ENCODE measurements at regions of chr15 and their contacts with region 1.

Region 1: DNA sequence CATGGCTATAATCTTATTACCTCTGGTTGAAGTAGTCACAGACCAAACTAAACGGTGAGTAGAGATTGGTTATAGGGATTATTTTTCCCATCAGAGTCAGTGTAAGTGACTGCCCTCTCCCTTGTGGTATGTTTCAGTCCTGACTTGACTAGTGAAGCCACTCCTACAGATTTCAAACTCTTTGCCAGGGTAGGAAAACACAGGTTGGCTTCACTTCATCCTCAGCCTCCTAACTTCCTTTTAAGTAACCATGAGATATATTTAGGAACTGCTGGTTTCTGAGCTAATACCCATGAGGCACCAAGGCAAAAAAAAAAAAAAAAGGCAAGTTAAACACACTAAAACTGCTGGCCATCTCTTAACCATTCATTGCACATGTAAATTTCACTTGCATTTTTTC is 349.2 kb upstream of the MCTP2 start:
- DNase-seq: no peak
- H3K4me3 ChIP-seq: no peak overlapping the region
- H3K27ac ChIP-seq: no peak overlapping the region
- H3K4me1 ChIP-seq: no peaks in the 10 kb centered on the region
- H3K27me3 ChIP-seq: no peaks in the 10 kb centered on the region
- CTCF ChIP-seq: no peak

Region 2: GRCh38 chr15:93617443-93617842 is 264.7 kb before region 1 on chr15:
- intact Hi-C with region 1: no loop called
- DNase-seq: no peak
- H3K4me3 ChIP-seq: no peak overlapping the region
- H3K27ac ChIP-seq: no peak overlapping the region
- H3K4me1 ChIP-seq: no peaks in the 10 kb centered on the region
- H3K27me3 ChIP-seq: no peaks in the 10 kb centered on the region
- CTCF ChIP-seq: no peak

Region 3: DNA sequence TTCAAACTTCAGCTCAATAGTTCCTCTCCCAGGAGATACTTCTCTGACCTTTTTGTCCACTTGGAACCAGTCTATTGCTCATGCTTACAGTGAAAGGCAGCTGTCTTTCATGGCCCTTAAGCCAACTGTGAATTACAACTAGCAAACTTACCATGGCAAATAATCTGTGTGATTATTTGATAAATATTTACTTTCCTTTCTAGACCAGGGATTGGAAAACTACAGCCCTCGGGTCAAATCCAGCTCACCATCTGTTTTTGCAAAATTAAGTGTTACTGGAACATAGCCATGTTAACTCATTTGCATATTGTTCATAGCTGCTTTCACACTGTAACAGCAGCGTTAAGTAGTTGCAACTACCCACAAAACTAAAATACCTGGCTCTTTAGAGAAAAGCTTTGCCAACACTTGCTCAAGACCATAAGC is 60.1 kb after region 1 on chr15:
- intact Hi-C with region 1: loop called (anchors 10 kb)
- DNase-seq: no peak
- H3K4me3 ChIP-seq: no peak overlapping the region
- H3K27ac ChIP-seq: no peak overlapping the region
- H3K4me1 ChIP-seq: no peaks in the 10 kb centered on the region
- H3K27me3 ChIP-seq: no peaks in the 10 kb centered on the region
- CTCF ChIP-seq: no peak